ENCODE measurements at regions of chr17 and their contacts with region 1.

Region 1: GRCh38 chr17:77331301-77331864 is 190.6 kb downstream of the SEC14L1 start:
- DNase-seq: peak; percentile 97
- H3K4me3 Mint-ChIP-seq: peak overlapping the region; percentile 68
- H3K27ac Mint-ChIP-seq: peak overlapping the region; percentile 92
- H3K4me1 Mint-ChIP-seq: peaks cover 64% of the 10 kb centered on the region
- H3K27me3 Mint-ChIP-seq: no peaks in the 10 kb centered on the region

Region 2: GRCh38 chr17:77343031-77343800 is 11.8 kb after region 1 on chr17:
- CTCF ChIA-PET with region 1: interaction called, 20 read pairs
- POLR2A ChIA-PET with region 1: no interaction called
- DNase-seq: no peak
- H3K4me3 Mint-ChIP-seq: peak overlapping the region; percentile 68
- H3K27ac Mint-ChIP-seq: peak overlapping the region; percentile 92
- H3K4me1 Mint-ChIP-seq: peaks cover 54% of the 10 kb centered on the region
- H3K27me3 Mint-ChIP-seq: no peaks in the 10 kb centered on the region

Region 3: GRCh38 chr17:77374170-77374936 is 43.0 kb after region 1 on chr17:
- CTCF ChIA-PET with region 1: interaction called, 19 read pairs
- POLR2A ChIA-PET with region 1: interaction called, 5 read pairs
- DNase-seq: peak; percentile 86
- H3K4me3 Mint-ChIP-seq: peak overlapping the region; percentile 86
- H3K27ac Mint-ChIP-seq: peak overlapping the region; percentile 89
- H3K4me1 Mint-ChIP-seq: peaks cover 70% of the 10 kb centered on the region
- H3K27me3 Mint-ChIP-seq: no peaks in the 10 kb centered on the region

Region 4: GRCh38 chr17:77404812-77405581 is 73.6 kb after region 1 on chr17:
- CTCF ChIA-PET with region 1: interaction called, 30 read pairs
- POLR2A ChIA-PET with region 1: interaction called, 4 read pairs
- DNase-seq: peak; percentile 90
- H3K4me3 Mint-ChIP-seq: peak overlapping the region; percentile 91
- H3K27ac Mint-ChIP-seq: peak overlapping the region; percentile 91
- H3K4me1 Mint-ChIP-seq: peaks cover 94% of the 10 kb centered on the region
- H3K27me3 Mint-ChIP-seq: no peaks in the 10 kb centered on the region

Region 5: GRCh38 chr17:77494664-77495435 is 163.5 kb after region 1 on chr17:
- CTCF ChIA-PET with region 1: interaction called, 22 read pairs
- POLR2A ChIA-PET with region 1: no interaction called
- DNase-seq: peak; percentile 74
- H3K4me3 Mint-ChIP-seq: no peak overlapping the region
- H3K27ac Mint-ChIP-seq: peak overlapping the region; percentile 72
- H3K4me1 Mint-ChIP-seq: peaks cover 30% of the 10 kb centered on the region
- H3K27me3 Mint-ChIP-seq: no peaks in the 10 kb centered on the region

Measured in activated CD4-positive, alpha-beta T cell treated with anti-CD3 and anti-CD28 coated beads, Interleukin-2, amount 10 ng/mL, durations not matched to agents 7 days and 5 days (primary cell).